Mammary epithelial cell (primary cell): ENCODE measurements at regions of chr7 and their contacts with region 1.

Region 1: DNA sequence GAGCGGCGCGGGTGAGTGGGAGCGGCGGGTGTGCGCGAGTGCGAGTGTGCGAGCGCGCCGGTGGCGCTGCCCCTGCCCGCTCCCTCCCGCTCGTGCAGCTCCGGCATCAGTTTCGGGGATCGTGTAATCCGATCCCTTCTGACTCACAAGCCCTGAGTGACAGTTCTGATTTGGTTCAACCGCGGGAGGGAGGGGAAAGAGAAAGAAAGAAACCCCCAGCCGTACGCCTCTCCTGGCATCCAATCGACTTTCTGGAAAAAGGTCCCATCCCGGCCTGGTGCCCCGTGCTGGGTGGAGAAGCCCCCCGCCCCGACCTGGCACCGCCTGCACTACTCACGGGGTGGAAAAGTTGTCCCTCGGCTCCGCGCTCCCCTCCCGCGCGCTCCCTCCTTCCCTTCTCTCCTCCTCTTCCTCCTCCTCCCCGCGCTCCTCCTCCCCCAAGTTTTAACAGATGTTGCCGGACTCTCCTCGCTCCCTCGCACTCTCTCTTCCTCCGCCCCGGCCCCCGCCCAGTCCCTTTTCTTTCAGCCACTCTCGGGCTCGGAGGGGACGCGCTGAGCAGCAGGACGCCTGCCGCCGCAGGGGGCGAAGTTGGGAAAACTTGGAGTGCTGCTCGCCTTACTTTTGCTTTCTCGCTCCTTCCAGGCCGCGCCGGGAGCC is at the start of gene GLI3:
- DNase-seq: peak; percentile 93
- H3K4me3 ChIP-seq: peak within 1 kb of the TSS; percentile 73 to 92 (median 73)
- H3K27ac ChIP-seq: peak within 1 kb of the TSS; percentile 81
- H3K4me1 ChIP-seq: peaks cover 31% of the 10 kb centered on the region
- H3K27me3 ChIP-seq: no peaks in the 10 kb centered on the region
- CTCF ChIP-seq: peak; percentile 5 to 43
- total RNA-seq, gene GLI3: 6.3 to 26.2 TPM

Region 2: DNA sequence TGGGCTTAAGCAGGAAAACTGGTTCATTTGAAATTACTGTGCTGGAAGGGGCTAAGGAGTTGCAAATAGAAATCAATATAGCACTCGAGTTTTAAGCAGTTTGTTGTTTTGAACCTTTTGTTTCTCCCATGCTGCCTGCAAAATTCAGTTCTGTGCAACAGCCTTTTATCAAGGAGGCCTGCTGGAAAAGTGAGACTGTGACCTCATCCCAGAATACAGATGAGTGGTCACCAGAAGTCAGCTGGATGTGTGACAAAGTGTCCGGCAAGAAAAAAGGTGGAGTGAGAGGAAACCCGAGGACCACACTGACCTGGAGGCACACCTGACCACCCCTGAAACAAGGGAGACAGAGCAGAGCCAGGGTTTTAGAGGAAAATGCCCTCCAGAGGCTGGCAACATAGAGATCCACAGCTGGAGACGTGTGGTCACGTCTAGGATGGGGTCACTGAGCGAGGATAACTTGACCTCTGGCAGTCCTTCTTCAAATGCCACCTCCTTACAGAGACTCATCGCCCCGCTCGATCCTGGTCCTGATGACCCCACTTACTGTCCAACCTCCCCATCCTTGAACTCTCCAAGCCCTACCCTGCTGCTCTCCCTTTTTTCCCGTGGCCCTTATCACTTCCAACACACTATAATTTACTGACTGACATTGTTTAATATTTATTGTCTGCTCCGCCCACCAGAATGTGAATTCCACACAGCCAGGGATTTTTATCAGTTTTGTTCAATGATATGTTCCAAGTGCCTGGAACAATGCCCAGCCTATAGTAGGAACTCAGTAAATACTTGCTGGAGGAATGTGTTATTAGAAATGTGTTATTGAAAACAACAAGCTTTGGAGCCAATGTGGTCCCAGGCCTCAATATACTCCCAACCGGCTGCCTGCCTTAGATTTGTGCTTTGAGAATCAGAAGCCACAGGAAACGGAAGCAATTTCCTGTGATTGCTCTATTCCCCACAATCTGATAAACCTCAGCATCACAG is 244.1 kb before region 1 on chr7:
- CTCF ChIA-PET with region 1: no interaction called
- dilution Hi-C with region 1: loop called (anchors 25 kb)
- in situ Hi-C with region 1: loop called in 1 of 2 experiments (anchors 25 kb)
- intact Hi-C with region 1: loop called (anchors 5 kb)
- DNase-seq: no peak
- H3K4me3 ChIP-seq: no peak overlapping the region
- H3K27ac ChIP-seq: no peak overlapping the region
- H3K4me1 ChIP-seq: peaks cover 69% of the 10 kb centered on the region
- H3K27me3 ChIP-seq: no peaks in the 10 kb centered on the region
- CTCF ChIP-seq: no peak

Region 3: GRCh38 chr7:42128703-42129102 is 108.6 kb before region 1 on chr7:
- CTCF ChIA-PET with region 1: no interaction called
- dilution Hi-C with region 1: no loop called
- in situ Hi-C with region 1: no loop called
- intact Hi-C with region 1: loop called (anchors 2 kb)
- DNase-seq: no peak
- H3K4me3 ChIP-seq: no peak overlapping the region
- H3K27ac ChIP-seq: no peak overlapping the region
- H3K4me1 ChIP-seq: peaks cover 4% of the 10 kb centered on the region
- H3K27me3 ChIP-seq: no peaks in the 10 kb centered on the region
- CTCF ChIP-seq: peak in 1 of 2 donors; percentile 42

Region 4: GRCh38 chr7:42337225-42337905 is 100.1 kb after region 1 on chr7:
- CTCF ChIA-PET with region 1: no interaction called
- dilution Hi-C with region 1: no loop called
- in situ Hi-C with region 1: no loop called
- intact Hi-C with region 1: no loop called
- DNase-seq: no peak
- H3K4me3 ChIP-seq: no peak overlapping the region
- H3K27ac ChIP-seq: no peak overlapping the region
- H3K4me1 ChIP-seq: no peaks in the 10 kb centered on the region
- H3K27me3 ChIP-seq: no peaks in the 10 kb centered on the region
- CTCF ChIP-seq: no peak

Region 5: GRCh38 chr7:42574685-42575084 is 337.4 kb after region 1 on chr7:
- CTCF ChIA-PET with region 1: no interaction called
- dilution Hi-C with region 1: no loop called
- in situ Hi-C with region 1: no loop called
- intact Hi-C with region 1: loop called (anchors 1 kb)
- DNase-seq: no peak
- H3K4me3 ChIP-seq: no peak overlapping the region
- H3K27ac ChIP-seq: no peak overlapping the region
- H3K4me1 ChIP-seq: peaks cover 3% of the 10 kb centered on the region
- H3K27me3 ChIP-seq: no peaks in the 10 kb centered on the region
- CTCF ChIP-seq: peak; percentile 53 to 64